ENCODE measurements at regions of chr17 and their contacts with region 1.

Region 1: GRCh38 chr17:16438557-16439302 is 23.4 kb downstream of the TRPV2 start:
- DNase-seq: peak; percentile 97
- ATAC-seq: peak; percentile 90
- H3K4me3 Mint-ChIP-seq: peak overlapping the region; percentile 100
- H3K27ac Mint-ChIP-seq: peak overlapping the region; percentile 99
- H3K4me1 Mint-ChIP-seq: peaks cover 49% of the 10 kb centered on the region
- H3K27me3 Mint-ChIP-seq: no peaks in the 10 kb centered on the region

Region 2: GRCh38 chr17:16428098-16428882 is 10.4 kb before region 1 on chr17:
- CTCF ChIA-PET with region 1: interaction called, 25 read pairs
- POLR2A ChIA-PET with region 1: interaction called, 5 read pairs
- DNase-seq: peak; percentile 60
- ATAC-seq: peak; percentile 82
- H3K4me3 Mint-ChIP-seq: no peak overlapping the region
- H3K27ac Mint-ChIP-seq: no peak overlapping the region
- H3K4me1 Mint-ChIP-seq: no peaks in the 10 kb centered on the region
- H3K27me3 Mint-ChIP-seq: no peaks in the 10 kb centered on the region